ENCODE measurements at regions of chr5 and their contacts with region 1.

Region 1: GRCh38 chr5:150272526-150272925 is 17.0 kb downstream of the CAMK2A start:
- DNase-seq: no peak
- H3K4me3 ChIP-seq: no peak overlapping the region
- H3K27ac ChIP-seq: no peak overlapping the region
- H3K4me1 ChIP-seq: peaks cover 0 to 8% (median 0%) of the 10 kb centered on the region in 3 donors
- H3K27me3 ChIP-seq: no peaks in the 10 kb centered on the region
- CTCF ChIP-seq: peak in 5 of 6 experiments; percentile 6 to 53 (median 20)
- POLR2A ChIP-seq: no peak

Region 2: DNA sequence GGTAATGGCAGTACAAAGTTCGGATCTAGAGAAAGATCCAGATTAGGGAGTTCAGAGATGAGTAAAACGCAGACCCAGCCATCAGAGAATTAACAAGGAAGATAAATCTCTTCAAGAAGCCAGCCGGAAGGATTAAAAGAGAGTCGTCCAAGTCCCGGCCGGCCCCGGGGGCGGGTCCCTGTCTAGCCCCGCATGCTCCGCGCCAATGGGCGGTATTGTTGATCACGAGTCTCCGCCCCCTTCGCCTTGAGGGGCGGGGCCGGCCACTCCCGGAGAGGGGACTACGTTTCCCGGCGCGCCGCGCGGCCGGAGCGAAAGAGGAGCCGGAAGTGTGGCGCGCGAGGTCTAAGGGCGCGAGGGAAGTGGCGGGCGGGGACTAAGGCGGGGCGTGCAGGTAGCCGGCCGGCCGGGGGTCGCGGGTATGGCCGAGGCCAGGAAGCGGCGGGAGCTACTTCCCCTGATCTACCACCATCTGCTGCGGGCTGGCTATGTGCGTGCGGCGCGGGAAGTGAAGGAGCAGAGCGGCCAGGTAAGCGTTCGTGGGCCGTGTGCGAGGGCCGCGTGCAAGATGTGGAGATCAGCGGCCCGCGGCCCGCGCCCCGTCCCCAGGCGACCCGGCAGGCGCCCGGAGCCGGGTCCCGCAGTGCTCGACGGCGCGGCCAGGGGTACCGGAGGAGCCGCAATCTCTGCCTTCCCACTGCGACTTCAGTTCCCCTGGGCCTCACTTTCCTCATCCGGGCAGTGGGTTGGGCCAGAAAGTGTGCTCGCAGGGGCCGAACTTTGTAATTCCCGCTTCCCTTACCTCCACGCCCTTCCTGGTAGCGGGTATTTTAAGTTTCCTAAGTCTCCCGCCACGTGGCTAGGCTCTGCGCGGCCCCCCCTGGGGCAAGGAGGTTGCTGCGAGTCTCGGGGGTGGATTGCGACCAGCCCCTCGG is 85.1 kb after region 1 on chr5 and contains the start of gene TCOF1:
- intact Hi-C with region 1: loop called (anchors 10 kb)
- DNase-seq: peak; percentile 91
- H3K4me3 ChIP-seq: peak within 1 kb of the TSS; percentile 62 to 83 (median 74)
- H3K27ac ChIP-seq: peak within 1 kb of the TSS; percentile 64 to 83 (median 75)
- H3K4me1 ChIP-seq: peaks cover 12 to 27% (median 15%) of the 10 kb centered on the region in 3 donors
- H3K27me3 ChIP-seq: no peaks in the 10 kb centered on the region
- CTCF ChIP-seq: no peak
- POLR2A ChIP-seq: peak in 1 of 4 donors; percentile 42
- total RNA-seq, gene TCOF1: 18.2 to 41.4 (median 24.8) TPM

Region 3: GRCh38 chr5:150436141-150436680 is 163.7 kb after region 1 on chr5:
- intact Hi-C with region 1: loop called (anchors 10 kb)
- DNase-seq: peak; percentile 48
- H3K4me3 ChIP-seq: peak overlapping the region in 1 of 4 donors; percentile 17
- H3K27ac ChIP-seq: no peak overlapping the region
- H3K4me1 ChIP-seq: peaks cover 1 to 23% (median 10%) of the 10 kb centered on the region in 3 donors
- H3K27me3 ChIP-seq: no peaks in the 10 kb centered on the region
- CTCF ChIP-seq: peak; percentile 83 to 90 (median 84)
- POLR2A ChIP-seq: no peak